Endothelial cell of umbilical vein (primary cell): ENCODE measurements at regions of chr3 and their contacts with region 1.

Region 1: GRCh38 chr3:134473868-134474546 is 11.8 kb downstream of the ANAPC13 start:
- DNase-seq: peak; percentile 73
- H3K4me3 ChIP-seq: no peak overlapping the region
- H3K27ac ChIP-seq: no peak overlapping the region
- H3K4me1 ChIP-seq: peaks cover 13% of the 10 kb centered on the region
- H3K27me3 ChIP-seq: no peaks in the 10 kb centered on the region
- CTCF ChIP-seq: peak; percentile 61 to 63
- POLR2A ChIP-seq: no peak

Region 2: GRCh38 chr3:134299185-134299887 is 174.7 kb before region 1 on chr3:
- CTCF ChIA-PET with region 1: interaction called, 296 read pairs
- POLR2A ChIA-PET with region 1: no interaction called
- dilution Hi-C with region 1: no loop called
- intact Hi-C with region 1: no loop called
- DNase-seq: peak; percentile 22
- H3K4me3 ChIP-seq: no peak overlapping the region
- H3K27ac ChIP-seq: no peak overlapping the region
- H3K4me1 ChIP-seq: no peaks in the 10 kb centered on the region
- H3K27me3 ChIP-seq: peaks cover 0 to 3% of the 10 kb centered on the region in 2 experiments
- CTCF ChIP-seq: no peak
- POLR2A ChIP-seq: no peak

Region 3: DNA sequence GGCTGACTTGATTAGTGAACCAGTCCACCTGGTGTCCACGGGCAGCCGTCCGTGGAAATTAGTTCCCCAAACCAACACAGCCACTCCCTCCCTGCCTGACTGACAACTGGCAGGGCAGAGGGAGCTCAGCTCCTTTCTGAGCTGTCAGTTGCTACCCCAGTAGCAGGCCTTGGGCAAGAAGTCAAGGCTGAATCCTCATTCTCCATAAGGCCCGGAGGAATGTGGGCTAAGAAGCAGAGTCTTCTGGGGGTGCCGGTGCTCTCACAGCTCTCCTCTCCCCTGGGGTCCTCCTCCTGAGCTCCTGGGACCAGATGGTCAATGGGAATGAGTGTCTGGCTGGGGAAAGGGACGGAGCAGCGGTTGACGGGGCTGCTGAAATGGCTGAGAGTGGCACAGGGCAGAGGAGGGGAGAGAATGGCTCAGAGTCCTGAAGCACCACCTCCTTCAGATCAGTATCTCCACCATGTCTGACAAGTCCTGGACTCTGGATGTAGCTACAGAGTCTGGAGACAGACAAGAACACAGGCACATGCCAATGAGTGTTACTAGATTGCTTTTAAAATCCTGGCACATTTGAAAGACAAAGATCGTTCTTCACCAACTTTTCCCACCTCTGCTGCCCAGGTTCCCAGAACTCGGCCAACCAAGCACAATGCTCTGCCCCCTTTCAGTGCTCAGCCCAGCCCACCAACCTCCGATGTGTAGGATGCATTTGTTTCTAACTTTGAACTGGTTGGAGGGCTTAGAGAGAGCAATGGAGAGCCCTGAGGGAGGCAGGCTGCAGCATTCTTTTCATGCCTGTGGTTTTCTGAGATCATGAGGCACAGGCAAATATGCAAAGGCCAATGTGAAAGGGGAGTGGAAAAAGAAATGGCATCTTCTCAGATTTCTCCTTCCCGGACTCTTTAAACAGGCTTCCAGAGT is 116.5 kb before region 1 on chr3:
- CTCF ChIA-PET with region 1: interaction called, 23 read pairs
- POLR2A ChIA-PET with region 1: no interaction called
- dilution Hi-C with region 1: no loop called
- intact Hi-C with region 1: no loop called
- DNase-seq: no peak
- H3K4me3 ChIP-seq: no peak overlapping the region
- H3K27ac ChIP-seq: no peak overlapping the region
- H3K4me1 ChIP-seq: peaks cover 13% of the 10 kb centered on the region
- H3K27me3 ChIP-seq: no peaks in the 10 kb centered on the region
- CTCF ChIP-seq: no peak
- POLR2A ChIP-seq: peak; percentile 4

Region 4: GRCh38 chr3:134373994-134374790 is 99.8 kb before region 1 on chr3 and contains the start of gene AMOTL2:
- CTCF ChIA-PET with region 1: interaction called, 43 read pairs
- POLR2A ChIA-PET with region 1: interaction called, 7 read pairs
- dilution Hi-C with region 1: no loop called
- intact Hi-C with region 1: loop called (anchors 1 kb)
- DNase-seq: peak; percentile 93
- H3K4me3 ChIP-seq: peak within 1 kb of the TSS; percentile 65 to 93 (median 73)
- H3K27ac ChIP-seq: peak within 1 kb of the TSS; percentile 99
- H3K4me1 ChIP-seq: peaks cover 47% of the 10 kb centered on the region
- H3K27me3 ChIP-seq: no peaks in the 10 kb centered on the region
- CTCF ChIP-seq: no peak
- POLR2A ChIP-seq: peak; percentile 99
- total RNA-seq, gene AMOTL2: 145 and 167 TPM in 2 replicates

Region 5: DNA sequence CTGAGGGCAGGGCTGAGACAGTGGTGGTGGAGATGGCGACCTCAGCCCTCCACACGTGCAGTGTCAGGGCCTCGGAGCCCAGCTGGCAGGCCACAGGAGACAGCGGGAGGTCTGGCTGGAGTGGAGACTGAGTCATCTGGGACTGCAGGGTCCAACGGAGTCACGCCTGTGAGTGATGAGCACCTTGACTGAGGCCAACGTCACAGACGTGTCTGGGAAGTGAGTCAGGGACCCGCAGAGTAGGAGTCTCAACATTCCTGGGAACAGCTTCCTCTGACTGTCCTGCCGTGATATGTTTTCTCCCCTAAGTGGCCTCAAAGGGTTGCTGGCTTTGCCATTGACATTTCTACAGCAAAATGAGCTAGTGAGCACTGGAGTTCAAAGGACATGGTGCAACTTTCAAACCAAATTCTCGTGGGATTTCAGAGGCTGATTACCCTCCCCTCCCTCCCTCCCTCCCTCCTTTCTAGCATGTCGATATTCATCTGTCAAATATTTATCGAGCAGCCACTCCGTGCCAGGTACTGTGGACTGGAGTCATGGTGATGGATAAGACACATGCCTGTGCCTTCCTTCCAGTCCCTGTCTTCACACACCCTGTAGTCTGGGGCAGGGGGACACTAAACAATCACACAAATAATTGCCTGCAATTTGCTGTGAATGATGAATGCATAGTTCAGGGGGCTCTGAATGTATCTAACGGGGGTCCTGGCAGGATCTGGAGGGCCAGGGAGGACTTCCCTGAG is 46.4 kb before region 1 on chr3:
- CTCF ChIA-PET with region 1: interaction called, 29 read pairs
- POLR2A ChIA-PET with region 1: no interaction called
- dilution Hi-C with region 1: no loop called
- intact Hi-C with region 1: loop called (anchors 2 kb)
- DNase-seq: peak; percentile 77
- H3K4me3 ChIP-seq: no peak overlapping the region
- H3K27ac ChIP-seq: peak overlapping the region; percentile 73
- H3K4me1 ChIP-seq: peaks cover 8% of the 10 kb centered on the region
- H3K27me3 ChIP-seq: peaks cover 5 to 11% of the 10 kb centered on the region in 2 experiments
- CTCF ChIP-seq: no peak
- POLR2A ChIP-seq: no peak

Region 6: DNA sequence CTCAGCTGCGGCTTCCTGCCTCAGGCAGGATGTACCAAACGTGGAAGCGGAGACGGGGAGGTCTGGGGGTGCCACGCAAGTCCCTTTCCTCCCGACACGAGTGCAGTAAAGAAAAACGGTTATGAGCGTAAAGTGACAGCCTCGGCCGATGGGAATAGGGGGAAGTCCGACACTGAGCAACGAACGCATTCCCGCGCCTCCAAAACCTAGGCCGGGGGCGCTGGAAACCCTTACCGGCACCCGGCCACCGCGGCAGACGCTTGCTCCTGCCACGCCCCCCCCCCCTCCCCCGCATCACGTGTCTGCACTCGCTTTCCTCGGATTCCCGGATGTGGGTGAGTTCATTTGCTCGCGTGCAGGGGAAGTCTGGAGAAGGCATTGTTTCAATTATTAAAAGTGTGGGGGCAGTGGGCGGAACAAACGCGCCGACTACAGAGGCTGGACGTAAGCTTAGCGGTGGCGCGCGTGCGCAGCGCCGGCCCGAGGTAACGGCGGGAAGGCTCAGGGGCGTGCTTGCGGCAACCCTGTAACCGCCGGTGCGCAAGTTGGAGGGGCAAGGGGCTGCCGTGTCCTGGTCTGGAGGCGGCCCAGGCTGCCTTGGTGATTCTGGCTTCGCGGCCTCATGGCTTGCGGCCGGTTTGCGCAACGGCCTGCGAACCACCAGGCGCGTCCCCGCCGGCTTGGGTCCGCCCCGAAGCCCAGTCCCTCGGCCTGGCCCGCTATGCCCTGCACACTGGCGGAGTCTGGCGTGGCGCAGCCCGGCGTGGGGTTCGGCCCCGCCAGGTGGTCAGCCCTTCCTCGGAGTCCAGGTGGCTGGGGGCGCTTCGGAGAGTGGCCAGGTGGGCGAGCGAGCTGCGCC is 11.9 kb after region 1 on chr3 and contains the starts of genes ANAPC13 and CEP63:
- CTCF ChIA-PET with region 1: interaction called, 33 read pairs
- POLR2A ChIA-PET with region 1: no interaction called
- dilution Hi-C with region 1: no loop called
- intact Hi-C with region 1: no loop called
- DNase-seq: peak; percentile 99
- H3K4me3 ChIP-seq: peak within 1 kb of the TSS; percentile 75 to 88 (median 75)
- H3K27ac ChIP-seq: peak within 1 kb of the TSS; percentile 92
- H3K4me1 ChIP-seq: peaks cover 45% of the 10 kb centered on the region
- H3K27me3 ChIP-seq: no peaks in the 10 kb centered on the region
- CTCF ChIP-seq: no peak
- POLR2A ChIP-seq: peak; percentile 82
- total RNA-seq, gene ANAPC13: 50.8 and 58.6 TPM in 2 replicates
- total RNA-seq, gene CEP63: 24.9 and 29.4 TPM in 2 replicates